CD4-positive, alpha-beta memory T cell (primary cell): ENCODE measurements at regions of chr7 and their contacts with region 1.

Region 1: DNA sequence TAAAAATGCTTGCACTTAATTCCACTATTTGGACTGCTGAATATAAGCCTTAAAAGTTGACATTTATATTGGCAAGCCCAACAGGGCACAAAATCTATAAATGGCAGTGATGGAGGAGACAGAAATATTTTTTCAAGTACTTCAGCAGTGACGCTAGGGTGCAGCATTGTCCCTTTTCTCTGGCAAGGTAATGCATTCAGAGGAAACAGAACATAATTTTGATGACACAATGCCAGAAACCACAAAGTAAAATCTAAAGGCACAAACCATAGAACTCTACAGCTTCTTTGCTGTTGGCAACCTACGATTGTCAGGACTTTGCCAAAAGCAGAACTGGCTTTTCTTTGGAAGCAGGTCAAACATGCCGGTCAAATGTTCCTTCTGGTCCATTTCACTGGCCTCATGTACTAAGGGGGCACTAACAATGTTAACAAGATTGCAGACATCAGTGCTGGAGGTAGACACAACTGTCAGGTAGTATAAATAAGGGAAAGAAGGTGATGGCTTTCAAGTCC is 30.9 kb upstream of the FAM133B start:
- DNase-seq: peak; percentile 75 to 86 (median 78)
- H3K4me3 ChIP-seq: no peak overlapping the region
- H3K4me3 Mint-ChIP-seq: peak overlapping the region in 5 of 8 donors; percentile 17 to 71 (median 36)
- H3K27ac ChIP-seq: peak overlapping the region; percentile 39
- H3K27ac Mint-ChIP-seq: peak overlapping the region; percentile 45 to 94 (median 88)
- H3K4me1 ChIP-seq: peaks cover 25% of the 10 kb centered on the region
- H3K4me1 Mint-ChIP-seq: peaks cover 19 to 40% (median 26%) of the 10 kb centered on the region in 4 donors
- H3K27me3 ChIP-seq: no peaks in the 10 kb centered on the region
- H3K27me3 Mint-ChIP-seq: no peaks in the 10 kb centered on the region

Region 2: DNA sequence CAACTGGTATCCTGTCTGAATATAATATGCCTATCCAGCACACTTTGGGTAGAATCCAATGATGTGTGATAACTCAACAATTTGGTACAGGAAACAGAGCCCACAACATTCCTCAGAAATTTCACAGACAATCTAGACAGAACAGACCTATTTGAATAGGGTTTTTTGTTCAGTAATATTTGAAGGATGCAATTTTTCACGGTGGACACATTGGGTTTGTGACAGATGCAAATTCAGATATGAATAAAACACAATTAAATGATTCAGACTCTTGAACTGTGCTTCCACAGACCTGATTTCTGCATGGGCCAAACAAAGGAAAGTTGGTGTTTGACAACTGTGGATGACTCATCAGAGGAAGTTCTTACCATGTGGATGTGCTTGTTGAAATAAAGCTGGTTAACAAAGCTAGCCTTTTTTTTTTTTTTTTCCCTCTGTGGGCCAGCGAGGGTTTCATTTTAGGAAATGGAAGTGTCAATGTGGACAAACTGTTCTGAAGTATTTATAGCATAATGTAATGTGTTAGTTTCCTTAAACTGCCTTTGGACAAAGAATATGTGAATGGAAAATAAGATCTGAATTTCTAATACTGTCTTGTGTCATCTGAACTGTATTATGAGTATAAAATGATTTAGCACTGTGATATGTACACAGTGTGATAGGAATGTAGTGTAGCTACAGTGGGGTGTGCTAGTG is 12.3 kb after region 1 on chr7:
- CTCF ChIA-PET with region 1: interaction called, 31 read pairs
- POLR2A ChIA-PET with region 1: interaction called, 3 read pairs
- intact Hi-C with region 1: no loop called
- DNase-seq: peak in 2 of 5 donors; percentile 13 to 72
- H3K4me3 ChIP-seq: no peak overlapping the region
- H3K4me3 Mint-ChIP-seq: peak overlapping the region in 4 of 8 donors; percentile 33 to 80 (median 46)
- H3K27ac ChIP-seq: no peak overlapping the region
- H3K27ac Mint-ChIP-seq: peak overlapping the region in 4 of 7 donors; percentile 36 to 83 (median 56)
- H3K4me1 ChIP-seq: peaks cover 42% of the 10 kb centered on the region
- H3K4me1 Mint-ChIP-seq: peaks cover 35 to 44% (median 39%) of the 10 kb centered on the region in 4 donors
- H3K27me3 ChIP-seq: no peaks in the 10 kb centered on the region
- H3K27me3 Mint-ChIP-seq: no peaks in the 10 kb centered on the region

Region 3: DNA sequence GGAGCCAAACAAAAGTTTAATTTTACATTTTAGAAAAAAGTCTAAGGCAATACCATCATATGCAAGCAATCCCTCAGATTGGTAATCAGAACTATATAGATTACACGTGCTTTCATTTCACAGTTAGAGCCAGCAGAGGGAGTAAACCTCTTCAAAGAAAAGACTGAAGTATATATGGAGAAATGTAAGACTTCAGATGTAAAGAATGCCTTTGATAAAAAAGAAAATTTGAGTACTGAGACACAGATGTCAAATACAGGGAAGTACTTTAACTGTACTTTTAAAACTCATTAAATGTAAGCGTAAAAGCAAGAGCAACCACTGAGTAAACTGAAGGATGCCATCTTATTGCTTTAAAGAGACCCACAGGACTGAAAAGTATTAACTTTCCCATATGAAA is 70.5 kb after region 1 on chr7:
- CTCF ChIA-PET with region 1: interaction called, 12 read pairs
- POLR2A ChIA-PET with region 1: no interaction called
- intact Hi-C with region 1: loop called (anchors 1 kb)
- DNase-seq: peak; percentile 38 to 58 (median 43)
- H3K4me3 ChIP-seq: no peak overlapping the region
- H3K4me3 Mint-ChIP-seq: peak overlapping the region in 2 of 8 donors; percentile 4 to 6
- H3K27ac ChIP-seq: no peak overlapping the region
- H3K27ac Mint-ChIP-seq: peak overlapping the region; percentile 18 to 84 (median 55)
- H3K4me1 ChIP-seq: peaks cover 32% of the 10 kb centered on the region
- H3K4me1 Mint-ChIP-seq: peaks cover 20 to 42% (median 33%) of the 10 kb centered on the region in 4 donors
- H3K27me3 ChIP-seq: no peaks in the 10 kb centered on the region
- H3K27me3 Mint-ChIP-seq: no peaks in the 10 kb centered on the region

Region 4: DNA sequence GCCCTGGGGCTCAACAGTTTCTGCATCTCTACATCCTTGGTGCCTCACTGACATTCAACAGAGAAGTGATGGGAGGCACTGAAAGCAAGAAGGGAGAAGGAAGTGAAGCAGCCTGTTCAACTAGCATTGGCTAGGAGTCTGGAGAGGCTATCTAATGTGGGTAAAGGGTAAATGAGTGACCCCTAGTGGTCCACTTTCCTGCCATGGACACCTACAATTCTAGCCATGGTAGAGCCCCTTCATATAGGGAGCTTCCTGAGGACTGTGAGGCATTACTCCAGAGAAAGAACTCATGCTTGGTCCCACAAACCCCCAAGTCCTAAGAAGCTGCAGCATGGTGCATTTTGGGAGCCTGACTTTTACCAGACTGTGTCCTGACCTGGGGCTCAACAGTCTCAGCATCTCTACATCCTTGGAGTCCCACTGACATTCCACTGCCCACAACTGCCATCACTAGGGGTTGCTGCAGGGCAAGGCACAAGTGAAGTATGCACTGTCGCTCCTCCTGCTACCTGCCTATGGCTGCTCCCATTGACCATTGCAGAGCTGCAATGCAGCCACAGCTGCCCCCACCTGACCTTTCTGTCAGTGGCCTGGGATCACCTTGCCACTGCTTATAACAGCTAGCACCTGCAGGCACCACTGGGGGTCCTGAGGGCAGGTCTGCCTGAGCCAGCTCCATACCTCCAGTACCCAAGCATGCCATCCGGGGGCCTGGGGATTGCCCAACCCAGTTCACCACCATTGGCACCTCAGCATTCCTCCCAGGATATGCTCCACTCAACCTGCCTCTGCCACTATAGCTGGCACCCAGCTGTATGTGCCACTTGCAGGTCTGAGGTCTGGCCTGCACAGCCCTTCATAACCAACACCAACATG is 259.4 kb after region 1 on chr7:
- CTCF ChIA-PET with region 1: interaction called, 5 read pairs
- POLR2A ChIA-PET with region 1: no interaction called
- intact Hi-C with region 1: loop called (anchors 1 kb)
- DNase-seq: peak in 1 of 5 donors; percentile 25
- H3K4me3 ChIP-seq: no peak overlapping the region
- H3K4me3 Mint-ChIP-seq: no peak overlapping the region
- H3K27ac ChIP-seq: no peak overlapping the region
- H3K27ac Mint-ChIP-seq: no peak overlapping the region
- H3K4me1 ChIP-seq: peaks cover 15% of the 10 kb centered on the region
- H3K4me1 Mint-ChIP-seq: peaks cover 13 to 19% (median 17%) of the 10 kb centered on the region in 4 donors
- H3K27me3 ChIP-seq: no peaks in the 10 kb centered on the region
- H3K27me3 Mint-ChIP-seq: no peaks in the 10 kb centered on the region

Region 5: DNA sequence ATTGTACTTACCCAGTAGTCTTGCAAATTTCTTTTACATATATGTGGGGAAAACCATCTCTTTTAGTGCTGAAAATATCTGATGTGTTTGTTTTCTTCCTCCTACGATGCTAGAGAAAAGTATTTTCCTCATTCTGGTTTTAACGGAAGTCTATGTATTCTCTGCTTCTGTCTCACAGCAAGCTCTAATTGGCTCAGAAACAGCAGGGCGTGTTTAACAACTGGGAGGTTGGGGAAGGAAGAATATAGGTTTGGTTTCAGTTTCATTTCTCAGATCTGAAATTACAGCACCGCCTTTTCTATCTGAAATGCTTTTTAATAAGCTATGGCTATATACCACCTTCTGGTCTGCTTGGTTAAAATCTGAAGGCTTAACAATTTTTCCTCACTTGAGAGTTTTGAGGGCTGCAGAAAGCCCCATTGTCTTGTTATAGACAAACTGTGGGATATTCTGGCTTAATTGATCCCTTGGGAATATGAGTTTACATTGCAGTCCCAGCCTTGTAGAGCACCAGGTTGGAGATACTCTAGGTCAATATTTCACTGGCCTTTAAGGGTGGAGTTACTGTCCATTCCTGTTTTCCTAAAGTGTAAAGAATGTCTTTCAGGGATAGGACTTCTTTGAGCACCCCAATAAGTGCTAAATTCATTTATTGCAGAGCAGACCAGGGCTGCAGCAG is 496.9 kb after region 1 on chr7 and contains the start of gene SAMD9:
- CTCF ChIA-PET with region 1: no interaction called
- POLR2A ChIA-PET with region 1: no interaction called
- intact Hi-C with region 1: loop called (anchors 5 kb)
- DNase-seq: peak; percentile 71 to 89 (median 82)
- H3K4me3 ChIP-seq: peak within 1 kb of the TSS; percentile 65 to 96
- H3K4me3 Mint-ChIP-seq: peak within 1 kb of the TSS; percentile 88 to 94 (median 91)
- H3K27ac ChIP-seq: peak within 1 kb of the TSS; percentile 75
- H3K27ac Mint-ChIP-seq: peak within 1 kb of the TSS; percentile 80 to 96 (median 95)
- H3K4me1 ChIP-seq: peaks cover 37% of the 10 kb centered on the region
- H3K4me1 Mint-ChIP-seq: peaks cover 33 to 60% (median 49%) of the 10 kb centered on the region in 4 donors
- H3K27me3 ChIP-seq: no peaks in the 10 kb centered on the region
- H3K27me3 Mint-ChIP-seq: no peaks in the 10 kb centered on the region
- total RNA-seq, gene SAMD9: 55.1 to 56.6 TPM